ENCODE measurements at regions of chr7 and their contacts with region 1.

Region 1: DNA sequence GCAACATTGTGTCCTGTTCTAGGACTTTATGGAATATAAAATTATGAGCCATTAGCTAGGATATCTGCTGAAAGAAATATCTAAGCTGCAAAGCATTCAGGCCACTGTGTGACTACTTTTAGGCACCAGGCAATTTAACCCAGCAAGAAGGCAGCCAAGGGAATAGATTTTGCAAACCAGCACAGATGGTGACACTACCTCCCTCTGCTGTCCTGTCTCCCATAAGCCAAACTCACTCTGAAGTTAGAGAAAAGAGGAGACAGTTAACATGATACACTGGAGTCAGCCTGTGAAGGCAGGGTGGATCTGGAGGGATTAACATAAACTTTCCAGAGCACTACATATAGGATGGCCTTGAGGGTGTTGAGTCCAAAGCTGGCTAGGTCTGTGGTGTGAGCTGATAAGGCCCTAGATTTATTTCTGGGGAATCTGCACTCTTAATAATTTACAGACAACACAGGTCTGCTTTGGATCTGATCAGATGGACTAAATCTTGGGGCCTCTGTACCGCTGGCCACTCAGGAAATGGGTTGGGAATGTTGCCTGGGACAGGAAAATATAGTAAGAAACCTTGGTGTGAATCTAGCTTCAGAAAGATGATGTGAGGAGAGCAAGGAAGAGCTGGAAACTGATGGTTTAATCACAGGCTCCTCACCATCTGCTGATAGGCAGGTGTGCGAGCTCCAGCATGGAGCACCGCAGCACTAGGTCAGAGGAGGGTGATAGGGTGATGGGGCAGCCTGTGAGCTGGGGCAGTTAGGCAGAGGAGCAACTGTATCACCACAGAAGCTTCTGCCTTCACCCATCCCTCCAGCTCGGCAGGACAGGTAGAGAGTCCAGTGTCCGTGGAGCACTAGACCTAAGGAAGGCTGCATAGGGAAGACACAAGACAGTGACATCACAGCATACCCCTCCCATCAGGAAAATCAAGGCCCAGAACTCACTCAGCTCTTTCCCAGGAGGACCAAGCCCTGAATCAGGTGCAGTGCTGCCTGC is 229.9 kb upstream of the PRSS1 start:
- DNase-seq: no peak
- ATAC-seq: no peak

Region 2: DNA sequence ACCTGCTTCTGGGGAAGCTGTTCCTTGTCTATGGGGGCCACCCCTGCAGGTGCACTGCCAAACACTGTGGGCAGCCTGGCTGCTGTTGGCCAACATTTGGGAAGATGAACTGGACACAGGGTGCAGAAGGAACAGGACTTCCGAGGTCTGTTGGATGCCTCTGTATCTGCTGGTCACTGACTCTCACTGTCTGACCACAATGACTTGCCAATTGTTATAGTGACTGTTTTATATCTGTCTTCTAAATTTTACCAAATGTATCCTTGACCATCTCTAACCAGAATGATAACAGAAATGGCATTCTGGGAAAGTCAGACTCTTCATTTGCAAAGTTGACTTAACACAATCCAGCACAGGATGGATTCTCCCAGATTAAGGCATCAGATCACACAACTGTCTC is 47.6 kb before region 1 on chr7:
- intact Hi-C with region 1: loop called (anchors 2 kb)
- DNase-seq: no peak
- ATAC-seq: no peak

Region 3: GRCh38 chr7:142587578-142588191 is 68.3 kb after region 1 on chr7:
- intact Hi-C with region 1: no loop called
- DNase-seq: no peak
- ATAC-seq: peak; percentile 77

Measured in Right ventricle myocardium inferior (tissue), 1 donor.